ENCODE measurements at regions of chr1 and their contacts with region 1.

Region 1: DNA sequence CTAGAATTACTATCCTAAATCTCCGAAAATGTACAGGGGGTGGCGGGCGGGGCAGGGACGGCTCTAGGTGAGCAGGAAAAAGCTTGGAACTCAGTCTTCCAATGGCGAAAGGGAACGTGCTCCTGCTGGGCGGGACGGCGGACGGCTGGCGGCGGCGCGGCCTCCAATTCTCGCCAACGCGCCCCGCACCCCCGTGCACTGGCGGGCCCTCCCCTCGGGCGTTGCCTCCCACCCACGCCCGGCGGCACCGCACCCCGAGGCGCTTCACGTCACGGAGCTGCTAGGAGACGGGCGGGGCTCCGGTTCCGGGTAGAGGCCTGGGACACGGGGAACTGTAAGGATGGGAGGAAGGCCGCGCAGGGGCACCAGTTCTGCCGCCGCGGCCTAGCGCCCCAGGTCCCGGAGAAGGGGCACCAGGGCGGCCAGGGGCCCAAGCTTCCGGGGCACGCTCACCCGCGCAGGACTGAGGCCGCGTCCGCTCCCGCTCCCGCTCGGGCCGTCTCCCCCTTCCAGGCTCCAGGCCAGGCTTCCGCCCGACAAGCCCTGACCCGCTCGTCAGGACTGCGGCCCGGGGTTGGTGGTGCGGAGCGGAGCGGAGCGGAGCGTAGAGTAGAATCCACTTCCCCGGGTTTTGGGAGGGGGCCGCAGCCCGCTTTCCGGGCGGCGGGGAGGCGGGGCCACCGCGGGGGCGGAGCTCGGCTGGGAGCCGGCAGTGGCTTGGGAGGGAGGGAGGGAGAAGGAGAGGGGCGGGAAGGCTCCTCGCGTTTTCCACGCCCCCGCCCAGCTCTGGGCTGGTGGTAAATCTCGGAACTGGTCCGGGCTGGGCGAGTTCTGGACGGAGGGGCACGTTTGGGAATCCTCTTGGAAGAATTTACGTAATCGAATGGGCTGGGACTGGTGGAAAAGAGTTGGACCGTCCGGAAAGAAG is at the start of gene DDX59:
- DNase-seq: peak; percentile 89
- H3K4me3 Mint-ChIP-seq: peak within 1 kb of the TSS; percentile 99
- H3K27ac Mint-ChIP-seq: peak within 1 kb of the TSS; percentile 99
- H3K4me1 Mint-ChIP-seq: peaks cover 49% of the 10 kb centered on the region
- H3K27me3 Mint-ChIP-seq: peaks cover 3% of the 10 kb centered on the region
- total RNA-seq, gene DDX59: 13.8 and 14.4 TPM in 2 replicates

Region 2: DNA sequence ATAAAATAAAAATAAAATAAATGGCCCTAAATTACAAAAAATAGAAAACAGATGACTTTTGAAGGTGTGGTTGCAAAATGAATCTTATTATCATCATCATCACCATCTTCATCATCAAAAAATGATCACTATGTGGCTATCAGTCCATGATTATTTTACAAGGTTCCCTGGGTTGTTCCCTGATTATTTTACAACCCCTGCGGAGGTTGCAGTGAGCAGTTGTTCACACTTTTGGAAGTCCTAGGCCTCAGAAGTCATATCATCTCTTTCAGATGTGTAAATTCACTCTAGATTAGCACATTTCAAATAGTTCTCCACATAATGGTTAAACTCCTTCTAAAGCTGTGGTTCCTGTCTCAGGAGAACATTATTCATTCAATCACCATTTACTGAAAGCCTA is 699.5 kb before region 1 on chr1:
- intact Hi-C with region 1: no loop called
- DNase-seq: no peak
- H3K4me3 Mint-ChIP-seq: no peak overlapping the region
- H3K27ac Mint-ChIP-seq: no peak overlapping the region
- H3K4me1 Mint-ChIP-seq: no peaks in the 10 kb centered on the region
- H3K27me3 Mint-ChIP-seq: peaks cover 16% of the 10 kb centered on the region

Region 3: DNA sequence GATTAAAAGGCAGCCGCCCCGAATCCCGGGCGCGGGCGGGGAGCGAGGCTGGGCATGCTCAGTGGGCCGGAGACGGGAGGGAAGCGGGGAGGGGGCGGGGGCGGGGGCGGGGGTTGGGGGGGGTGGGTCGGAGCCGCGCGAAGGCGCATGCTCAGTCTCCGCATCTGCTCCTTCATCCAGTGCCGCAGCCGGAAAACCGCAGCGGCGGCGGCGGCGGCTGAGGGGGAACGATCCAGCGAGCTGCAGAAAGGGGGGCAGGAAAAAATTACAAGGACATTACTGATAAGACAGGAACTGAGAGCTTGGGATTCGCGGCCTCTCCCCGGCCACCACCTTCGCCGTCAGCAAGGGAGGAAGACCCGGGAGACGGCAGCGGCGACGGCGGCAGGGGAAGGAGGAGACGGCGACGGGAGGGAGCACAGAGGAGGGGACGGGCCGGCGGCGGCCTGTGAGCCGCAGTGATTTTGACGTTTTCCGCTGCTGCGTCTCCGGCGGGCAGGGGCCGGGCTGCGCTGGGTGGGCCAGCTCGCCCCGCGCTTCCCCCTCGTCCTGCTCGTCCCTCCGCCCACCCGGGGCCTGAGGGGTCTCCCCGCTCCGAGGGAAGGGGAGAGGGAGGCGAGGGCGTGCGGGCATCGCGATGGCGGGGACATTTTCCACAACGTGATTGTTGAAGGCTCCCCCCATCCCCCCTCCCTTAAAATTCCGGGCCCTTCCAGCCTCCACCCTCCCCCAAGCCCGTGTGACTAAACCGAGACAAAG is 69.3 kb after region 1 on chr1 and contains the start of gene CAMSAP2:
- intact Hi-C with region 1: loop called (anchors 1 kb)
- DNase-seq: peak; percentile 52
- H3K4me3 Mint-ChIP-seq: peak within 1 kb of the TSS; percentile 91
- H3K27ac Mint-ChIP-seq: peak within 1 kb of the TSS; percentile 80
- H3K4me1 Mint-ChIP-seq: peaks cover 23% of the 10 kb centered on the region
- H3K27me3 Mint-ChIP-seq: peaks cover 40% of the 10 kb centered on the region
- total RNA-seq, gene CAMSAP2: 0.83 and 1.3 TPM in 2 replicates

Region 4: GRCh38 chr1:200992382-200993048 is 322.9 kb after region 1 on chr1:
- intact Hi-C with region 1: no loop called
- DNase-seq: no peak
- H3K4me3 Mint-ChIP-seq: no peak overlapping the region
- H3K27ac Mint-ChIP-seq: no peak overlapping the region
- H3K4me1 Mint-ChIP-seq: no peaks in the 10 kb centered on the region
- H3K27me3 Mint-ChIP-seq: no peaks in the 10 kb centered on the region

Region 5: DNA sequence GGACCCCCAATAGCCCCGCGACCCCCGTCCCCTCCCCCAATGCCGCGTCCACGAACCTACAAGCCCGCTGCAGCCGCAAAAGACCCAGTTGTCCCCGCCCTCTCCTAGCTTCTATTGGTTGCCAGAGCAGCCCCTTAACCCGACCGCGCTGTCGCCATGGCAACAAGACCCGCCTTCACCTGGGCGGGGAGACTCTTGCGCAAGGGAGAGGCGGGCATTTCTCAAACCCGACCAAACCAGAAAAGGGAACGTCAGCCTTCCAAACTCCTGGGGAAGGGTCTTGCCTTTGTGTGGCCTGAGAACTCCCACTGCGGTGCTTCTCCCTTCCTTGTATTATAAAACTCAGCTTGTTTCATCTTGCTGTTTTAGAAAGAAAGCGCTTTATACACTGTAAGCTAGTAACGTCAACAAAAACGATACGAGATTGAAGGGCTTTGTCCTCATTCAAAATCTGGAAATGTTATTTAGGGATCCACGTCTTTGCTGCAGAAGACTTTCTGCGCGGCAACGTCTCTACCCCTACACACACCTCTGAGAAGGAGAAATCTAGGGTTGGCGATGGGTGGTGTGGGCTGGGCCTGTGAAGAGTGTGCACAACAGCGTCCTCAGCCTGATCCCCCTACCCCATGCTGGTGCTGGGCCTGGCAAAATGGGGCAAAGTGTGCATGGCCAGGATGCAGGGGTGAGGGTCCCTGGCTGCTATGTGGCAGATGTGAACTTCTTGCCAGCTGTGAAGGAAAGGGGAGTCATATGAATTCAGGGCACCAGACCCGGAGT is 485.0 kb after region 1 on chr1 and contains the start of gene TMEM9:
- intact Hi-C with region 1: loop called (anchors 10 kb)
- DNase-seq: peak; percentile 95
- H3K4me3 Mint-ChIP-seq: peak within 1 kb of the TSS; percentile 85
- H3K27ac Mint-ChIP-seq: peak within 1 kb of the TSS; percentile 88
- H3K4me1 Mint-ChIP-seq: peaks cover 23% of the 10 kb centered on the region
- H3K27me3 Mint-ChIP-seq: peaks cover 18% of the 10 kb centered on the region
- total RNA-seq, gene TMEM9: 13.2 and 13.9 TPM in 2 replicates

Measured in activated T-helper 1 cell treated with anti-CD3 and anti-CD28 coated beads, Interleukin-12 subunit alpha, Interleukin-12 subunit beta, Interleukin-2, Interleukin-4 antibody, amounts not matched to agents 30 ng/mL and 10 ng/mL and 1 ng/mL, durations not matched to agents 14 hours and 24 hours and 36 hours (primary cell).